Caco-2 (cell line): ENCODE measurements at regions of chr1 and their contacts with region 1.

Region 1: DNA sequence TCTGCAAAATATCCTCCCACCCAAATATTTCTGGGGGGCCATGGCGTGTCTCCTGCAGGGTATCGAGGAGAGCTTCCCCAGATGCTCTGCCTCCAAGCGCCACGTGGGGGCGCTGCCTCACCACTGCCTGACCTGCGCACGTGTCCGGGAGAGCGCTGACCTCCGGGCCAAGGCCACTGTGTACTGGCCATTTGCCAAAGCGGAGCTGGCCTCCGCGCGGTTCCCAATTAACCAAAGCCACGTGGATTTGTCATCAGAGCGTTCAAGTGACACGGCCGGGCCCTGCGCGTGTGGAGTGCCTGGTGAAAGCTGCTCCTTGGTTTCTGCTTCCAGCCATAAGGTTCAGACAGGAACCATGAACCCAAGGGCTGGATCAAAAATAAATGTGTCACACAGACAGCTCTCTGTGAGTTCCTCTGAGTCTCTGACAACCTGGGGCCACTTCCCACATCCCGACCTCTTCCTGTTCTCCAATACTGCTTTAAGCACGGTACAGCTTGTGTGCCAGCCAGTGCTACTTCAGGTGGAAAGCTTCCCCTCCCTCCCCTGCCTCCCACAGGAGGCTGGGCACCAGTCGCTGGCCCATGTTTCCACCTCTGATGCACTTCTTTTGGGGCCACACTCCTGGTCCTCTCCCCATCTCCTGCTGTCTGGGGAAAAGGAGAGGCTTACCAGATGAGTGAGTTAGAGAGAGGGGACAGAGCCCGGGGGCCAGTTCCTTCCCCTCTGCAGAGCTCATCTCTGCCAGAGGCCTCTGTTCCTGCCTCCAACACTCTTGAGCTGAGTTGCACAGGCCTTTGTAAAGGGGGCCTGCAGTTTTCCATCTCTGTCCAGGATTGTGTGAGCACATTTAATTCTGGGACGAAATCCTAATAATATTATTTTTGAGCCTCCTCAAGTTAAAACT is 26.1 kb downstream of the ZP4 start:
- DNase-seq: peak; percentile 44 to 58
- H3K4me3 ChIP-seq: no peak overlapping the region
- H3K4me3 Mint-ChIP-seq: no peak overlapping the region
- H3K27ac Mint-ChIP-seq: peak overlapping the region; percentile 7
- H3K4me1 ChIP-seq: no peaks in the 10 kb centered on the region
- H3K4me1 Mint-ChIP-seq: no peaks in the 10 kb centered on the region
- H3K27me3 ChIP-seq: no peaks in the 10 kb centered on the region
- H3K27me3 Mint-ChIP-seq: no peaks in the 10 kb centered on the region
- CTCF ChIP-seq: peak; percentile 78 to 83

Region 2: DNA sequence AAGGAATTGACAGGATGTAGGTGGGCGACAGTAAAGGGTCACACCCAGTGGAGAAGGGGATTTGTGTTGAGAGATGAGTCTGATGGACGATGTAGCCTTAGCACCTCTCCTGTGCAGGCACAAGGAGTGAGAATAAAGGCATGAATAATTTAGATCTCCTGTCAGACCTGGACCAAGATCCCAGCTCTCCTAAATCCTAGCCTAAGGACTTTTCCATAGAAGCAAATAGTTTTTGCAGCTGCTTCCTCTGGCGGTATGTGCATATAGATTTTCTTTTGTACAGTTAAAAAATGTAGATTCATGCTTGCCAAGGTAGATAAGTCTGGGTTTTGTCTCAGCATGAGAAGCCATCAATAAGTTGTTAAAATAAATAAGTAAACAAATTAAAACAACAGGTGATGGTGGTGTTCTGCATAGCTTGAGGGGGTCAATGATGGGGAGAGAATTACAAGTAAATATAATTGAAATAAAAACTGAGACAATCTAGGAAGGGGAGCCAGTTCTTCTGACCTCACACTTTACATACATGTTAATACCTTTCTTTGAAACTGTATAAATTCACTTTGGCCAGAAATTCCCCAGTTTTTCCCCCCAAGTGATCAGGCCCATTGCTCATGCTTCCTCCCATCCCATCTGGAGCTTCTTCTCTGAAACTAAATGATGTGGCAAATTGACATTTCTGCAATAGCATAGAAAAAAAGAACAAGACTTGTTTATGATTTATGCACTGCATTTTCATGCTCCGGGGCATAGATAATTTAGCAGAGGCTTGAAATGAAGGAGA is 38.6 kb after region 1 on chr1:
- CTCF ChIA-PET with region 1: no interaction called
- POLR2A ChIA-PET with region 1: no interaction called
- intact Hi-C with region 1: loop called (anchors 1 kb)
- DNase-seq: no peak
- H3K4me3 ChIP-seq: no peak overlapping the region
- H3K4me3 Mint-ChIP-seq: no peak overlapping the region
- H3K27ac Mint-ChIP-seq: no peak overlapping the region
- H3K4me1 ChIP-seq: no peaks in the 10 kb centered on the region
- H3K4me1 Mint-ChIP-seq: no peaks in the 10 kb centered on the region
- H3K27me3 ChIP-seq: no peaks in the 10 kb centered on the region
- H3K27me3 Mint-ChIP-seq: no peaks in the 10 kb centered on the region
- CTCF ChIP-seq: no peak

Region 3: DNA sequence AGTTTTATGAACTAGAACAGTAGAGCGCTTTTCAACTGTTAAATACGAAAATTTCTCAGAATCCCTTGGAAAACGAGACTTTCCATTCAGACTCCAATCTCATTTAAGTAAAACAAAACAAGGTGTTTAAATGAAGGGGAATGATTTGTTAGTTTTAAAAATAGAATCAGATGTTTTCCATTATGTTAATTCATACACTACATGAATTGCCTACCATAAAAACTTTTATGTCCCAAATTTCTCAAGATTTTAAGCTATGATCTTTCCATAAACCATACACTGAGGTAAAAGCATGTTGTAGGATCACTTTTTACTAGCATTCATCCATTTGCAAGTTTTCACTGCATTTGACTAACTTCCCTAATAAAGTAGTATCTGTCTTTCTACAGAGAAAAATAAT is 206.5 kb after region 1 on chr1:
- CTCF ChIA-PET with region 1: no interaction called
- POLR2A ChIA-PET with region 1: no interaction called
- intact Hi-C with region 1: no loop called
- DNase-seq: no peak
- H3K4me3 ChIP-seq: no peak overlapping the region
- H3K4me3 Mint-ChIP-seq: no peak overlapping the region
- H3K27ac Mint-ChIP-seq: no peak overlapping the region
- H3K4me1 ChIP-seq: no peaks in the 10 kb centered on the region
- H3K4me1 Mint-ChIP-seq: no peaks in the 10 kb centered on the region
- H3K27me3 ChIP-seq: no peaks in the 10 kb centered on the region
- H3K27me3 Mint-ChIP-seq: no peaks in the 10 kb centered on the region
- CTCF ChIP-seq: no peak

Region 4: DNA sequence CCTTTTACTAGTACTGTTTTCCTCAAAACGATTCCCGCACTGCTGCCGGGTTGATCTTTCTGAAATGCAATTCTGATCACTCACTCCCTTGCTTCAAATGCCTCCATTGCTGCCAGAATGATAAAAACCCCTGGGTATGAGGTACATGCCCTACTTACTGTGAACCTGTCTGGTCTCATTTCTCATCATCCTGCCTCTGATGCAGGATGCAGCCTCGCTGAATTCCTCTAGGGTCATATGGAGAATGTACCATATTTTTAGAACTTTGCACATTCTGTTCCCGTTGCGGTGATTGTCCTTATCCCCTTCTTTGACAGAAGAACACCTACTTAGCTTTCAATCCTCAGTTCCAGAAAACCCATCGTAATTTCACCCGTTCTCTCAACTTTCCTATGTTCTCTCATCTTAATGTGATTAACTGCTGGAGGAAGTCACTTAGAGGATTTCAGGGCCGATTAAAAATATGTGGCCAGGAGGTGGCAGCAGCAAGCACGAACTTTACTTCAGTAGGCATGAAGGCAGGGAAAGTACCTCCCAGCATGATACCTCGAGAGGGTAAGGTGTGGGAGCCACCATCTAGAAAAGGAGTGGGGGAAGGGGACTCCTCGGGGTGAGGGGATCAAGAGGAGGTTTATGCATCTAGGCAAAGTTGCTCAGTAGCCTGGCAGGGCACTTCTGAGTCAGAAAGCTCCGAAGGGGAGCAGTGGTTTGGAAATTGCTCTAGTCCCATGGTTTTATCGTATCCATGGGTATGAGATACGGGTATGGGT is 387.6 kb after region 1 on chr1:
- CTCF ChIA-PET with region 1: no interaction called
- POLR2A ChIA-PET with region 1: no interaction called
- intact Hi-C with region 1: loop called (anchors 10 kb)
- DNase-seq: peak; percentile 45 to 48
- H3K4me3 ChIP-seq: no peak overlapping the region
- H3K4me3 Mint-ChIP-seq: no peak overlapping the region
- H3K27ac Mint-ChIP-seq: no peak overlapping the region
- H3K4me1 ChIP-seq: no peaks in the 10 kb centered on the region
- H3K4me1 Mint-ChIP-seq: no peaks in the 10 kb centered on the region
- H3K27me3 ChIP-seq: no peaks in the 10 kb centered on the region
- H3K27me3 Mint-ChIP-seq: peaks cover 5% of the 10 kb centered on the region
- CTCF ChIP-seq: peak; percentile 49